Psoas muscle (tissue), 8 donors: ENCODE measurements at regions of chr21 and their contacts with region 1.

Region 1: DNA sequence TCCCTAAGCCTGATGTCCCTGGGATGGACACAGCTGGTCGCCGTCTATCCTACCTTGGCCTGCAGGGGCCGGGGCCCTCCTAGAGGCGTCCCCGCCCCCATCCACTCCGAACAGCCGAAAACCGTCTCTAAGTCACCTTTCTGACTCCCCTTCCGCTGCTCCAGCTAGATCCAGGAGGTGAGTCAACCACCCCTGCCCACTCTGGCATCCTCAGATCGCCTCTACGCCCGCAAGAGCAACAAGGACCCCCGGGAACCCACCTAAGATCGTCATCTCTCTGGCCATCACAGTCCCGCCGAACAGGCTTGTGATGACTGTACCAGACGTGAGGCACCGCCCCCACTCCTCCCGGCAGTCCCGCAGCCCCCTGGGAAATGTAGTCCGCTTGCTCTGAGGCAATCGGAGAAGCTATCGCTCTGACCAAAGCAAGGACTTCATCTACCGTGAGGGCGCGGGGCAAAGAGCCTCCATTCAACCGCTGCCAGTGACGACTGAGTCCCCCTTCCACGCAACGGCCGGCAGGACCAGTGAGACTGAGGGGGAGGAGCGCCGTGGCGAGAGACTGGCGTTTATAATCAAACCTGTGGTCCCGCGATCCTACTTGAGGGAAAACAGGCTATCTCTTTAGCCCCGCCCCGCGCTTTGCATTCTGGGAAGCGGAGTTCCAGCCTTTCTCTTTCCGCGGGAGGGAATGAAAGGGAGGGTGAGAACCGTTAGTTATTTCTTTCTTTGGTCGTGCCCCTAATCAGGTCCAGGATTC is at the start of gene HSPA13:
- DNase-seq: peak; percentile 100
- ATAC-seq: peak; percentile 99 to 100 (median 100)
- H3K4me3 ChIP-seq: peak within 1 kb of the TSS; percentile 81
- H3K27ac ChIP-seq: peak within 1 kb of the TSS; percentile 83
- H3K4me1 ChIP-seq: peaks cover 19% of the 10 kb centered on the region
- H3K27me3 ChIP-seq: no peaks in the 10 kb centered on the region
- CTCF ChIP-seq: no peak
- total RNA-seq, gene HSPA13: 6.5 to 11.5 (median 9.3) TPM

Region 2: DNA sequence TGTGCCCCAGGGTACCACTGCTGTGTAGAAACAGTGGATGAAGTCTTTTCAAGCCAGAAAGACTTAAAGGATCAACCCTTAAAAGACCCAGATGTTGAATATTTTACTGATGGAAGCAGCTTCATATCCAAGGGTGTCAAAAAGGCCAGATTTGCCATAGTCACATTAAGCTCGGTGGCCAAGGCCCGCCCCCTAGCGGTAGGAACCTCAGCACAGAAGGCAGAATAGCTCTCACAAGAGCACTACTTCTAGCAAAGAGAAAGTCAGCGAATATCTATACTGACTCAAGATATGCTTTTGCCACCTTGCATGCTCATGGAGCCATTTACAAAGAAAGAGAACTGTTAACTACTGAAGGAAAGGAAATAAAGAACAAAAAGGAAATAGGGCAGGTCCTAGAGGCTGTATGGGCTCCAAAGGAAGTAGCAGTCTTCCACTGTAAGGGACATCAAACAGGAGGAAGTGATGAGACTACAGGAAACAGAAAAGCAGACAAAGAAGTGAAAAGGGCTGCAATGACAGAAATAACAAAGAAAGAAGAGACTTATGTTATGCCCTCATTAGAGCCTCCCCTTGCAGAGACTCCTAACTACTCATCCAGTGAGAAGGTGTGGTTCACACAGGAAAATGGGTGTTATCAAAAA is 262.8 kb before region 1 on chr21:
- intact Hi-C with region 1: no loop called
- DNase-seq: no peak
- ATAC-seq: no peak
- H3K4me3 ChIP-seq: no peak overlapping the region
- H3K27ac ChIP-seq: no peak overlapping the region
- H3K4me1 ChIP-seq: no peaks in the 10 kb centered on the region
- H3K27me3 ChIP-seq: no peaks in the 10 kb centered on the region
- CTCF ChIP-seq: peak; percentile 30

Region 3: DNA sequence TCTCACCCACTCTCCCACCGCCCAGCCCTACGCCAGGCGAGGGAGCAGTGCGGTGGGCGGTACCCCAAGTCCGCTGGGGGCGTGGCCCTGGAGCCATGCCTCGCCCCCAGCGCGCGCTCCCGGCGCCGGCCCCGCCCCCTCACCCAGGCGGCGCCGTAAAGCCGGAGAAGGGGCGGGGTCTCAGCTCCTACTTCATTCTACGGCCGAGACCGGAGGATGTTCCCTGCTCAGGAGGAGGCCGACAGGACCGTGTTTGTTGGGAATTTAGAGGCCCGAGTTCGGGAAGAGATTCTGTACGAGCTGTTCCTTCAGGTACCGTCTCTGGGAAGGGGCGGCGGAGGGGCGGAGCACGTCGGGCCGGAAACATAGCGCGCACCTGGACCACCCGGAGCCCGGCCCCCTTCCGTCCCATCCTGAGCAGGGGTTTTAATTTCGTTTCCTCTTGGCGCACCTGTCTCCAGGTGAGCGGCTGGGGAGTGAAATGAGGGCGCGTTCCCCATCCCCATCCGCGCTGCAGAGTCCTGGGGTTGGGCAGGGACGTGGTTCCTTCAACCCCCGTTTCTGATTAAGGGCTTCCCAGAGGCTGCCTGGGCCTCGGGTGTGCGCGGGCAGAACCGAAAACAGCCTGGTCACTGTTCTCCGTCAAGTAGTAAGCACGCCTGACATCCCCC is 166.9 kb before region 1 on chr21 and contains the start of gene RBM11:
- intact Hi-C with region 1: no loop called
- DNase-seq: peak; percentile 50 to 69
- ATAC-seq: peak; percentile 39 to 82 (median 78)
- H3K4me3 ChIP-seq: peak within 1 kb of the TSS; percentile 67
- H3K27ac ChIP-seq: no peak within 1 kb of the TSS
- H3K4me1 ChIP-seq: peaks cover 6% of the 10 kb centered on the region
- H3K27me3 ChIP-seq: peaks cover 0 to 12% (median 7%) of the 10 kb centered on the region in 3 donors
- CTCF ChIP-seq: no peak
- total RNA-seq, gene RBM11: not detected

Region 4: DNA sequence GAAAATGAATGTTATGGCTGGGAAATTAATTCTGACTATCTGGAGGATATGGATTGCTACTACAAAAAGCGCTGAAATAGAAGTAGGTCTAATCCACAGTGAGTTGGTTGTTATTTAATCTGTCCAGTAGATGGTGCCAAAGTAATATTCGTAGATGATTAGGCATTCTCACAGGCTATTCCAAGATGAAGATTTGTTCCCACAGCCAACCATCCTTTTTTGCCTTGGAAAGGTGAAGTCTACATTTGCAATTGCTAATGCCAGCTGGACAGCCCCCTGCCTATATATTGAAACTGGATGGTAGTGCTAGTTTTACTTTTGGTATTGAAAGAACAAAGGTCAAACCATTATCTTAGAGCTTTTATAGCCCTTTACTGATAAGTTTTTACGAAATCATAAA is 123.3 kb before region 1 on chr21:
- intact Hi-C with region 1: loop called in 1 of 2 experiments (anchors 5 kb)
- DNase-seq: no peak
- ATAC-seq: peak; percentile 62 to 86 (median 66)
- H3K4me3 ChIP-seq: no peak overlapping the region
- H3K27ac ChIP-seq: no peak overlapping the region
- H3K4me1 ChIP-seq: no peaks in the 10 kb centered on the region
- H3K27me3 ChIP-seq: no peaks in the 10 kb centered on the region
- CTCF ChIP-seq: peak; percentile 67

Region 5: DNA sequence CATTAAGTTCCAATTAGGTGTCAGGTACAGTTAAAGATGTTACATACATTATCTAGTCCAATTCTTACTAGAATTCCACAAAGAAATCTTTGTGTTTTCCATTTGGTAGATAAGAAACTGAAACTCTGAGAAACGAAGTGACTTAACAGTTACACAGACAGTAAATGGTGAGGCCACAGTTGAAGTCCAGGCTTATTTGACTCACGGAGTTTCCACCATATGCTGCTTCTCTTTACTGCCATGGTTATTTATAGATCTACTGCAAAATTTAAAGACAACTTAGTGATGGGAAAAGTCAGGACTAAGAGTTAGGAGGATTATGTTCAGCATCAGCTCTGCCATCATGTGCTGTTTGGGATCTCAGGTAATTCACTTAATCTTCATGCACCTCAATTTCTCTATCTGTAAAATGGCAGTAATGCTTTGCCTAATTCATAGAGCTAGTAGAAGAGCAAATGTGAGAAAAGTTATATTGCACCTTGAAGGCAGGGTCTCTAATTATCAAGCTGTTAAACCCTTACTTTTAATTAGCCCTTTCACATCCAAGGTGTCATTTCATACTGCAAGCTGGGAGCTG is 189.3 kb after region 1 on chr21:
- intact Hi-C with region 1: no loop called
- DNase-seq: no peak
- ATAC-seq: no peak
- H3K4me3 ChIP-seq: no peak overlapping the region
- H3K27ac ChIP-seq: no peak overlapping the region
- H3K4me1 ChIP-seq: no peaks in the 10 kb centered on the region
- H3K27me3 ChIP-seq: no peaks in the 10 kb centered on the region
- CTCF ChIP-seq: no peak